Left ventricle myocardium inferior (tissue), 1 donor: ENCODE measurements at regions of chr3 and their contacts with region 1.

Region 1: GRCh38 chr3:88113311-88114162 is 36.2 kb upstream of the C3orf38 start:
- DNase-seq: no peak
- H3K4me3 ChIP-seq: no peak overlapping the region
- H3K27ac ChIP-seq: no peak overlapping the region
- H3K4me1 ChIP-seq: peaks cover 18% of the 10 kb centered on the region
- H3K27me3 ChIP-seq: no peaks in the 10 kb centered on the region
- CTCF ChIP-seq: peak; percentile 84

Region 2: GRCh38 chr3:88059369-88060170 is 54.0 kb before region 1 on chr3:
- intact Hi-C with region 1: loop called (anchors 10 kb)
- DNase-seq: no peak
- H3K4me3 ChIP-seq: peak overlapping the region; percentile 93
- H3K27ac ChIP-seq: peak overlapping the region; percentile 99
- H3K4me1 ChIP-seq: peaks cover 78% of the 10 kb centered on the region
- H3K27me3 ChIP-seq: no peaks in the 10 kb centered on the region
- CTCF ChIP-seq: no peak

Region 3: DNA sequence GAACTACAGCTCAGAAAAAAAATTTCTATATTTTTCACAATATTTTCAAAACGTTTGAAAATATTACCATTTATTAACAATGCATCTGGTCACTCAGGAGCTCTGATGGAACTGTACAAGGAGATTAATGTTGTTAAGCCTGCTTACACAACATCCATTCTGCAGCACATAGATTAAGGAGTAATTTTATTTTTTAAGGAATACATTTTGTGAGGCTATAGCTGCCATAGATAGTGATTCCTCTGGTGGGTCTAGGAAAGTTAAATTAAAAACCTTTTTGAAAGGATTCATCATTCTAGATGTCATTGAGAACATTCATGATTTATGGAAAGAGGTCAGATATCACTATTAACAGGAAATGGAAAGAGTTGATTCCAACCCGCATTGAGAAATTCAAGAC is 233.1 kb after region 1 on chr3:
- intact Hi-C with region 1: no loop called
- DNase-seq: no peak
- H3K4me3 ChIP-seq: no peak overlapping the region
- H3K27ac ChIP-seq: no peak overlapping the region
- H3K4me1 ChIP-seq: no peaks in the 10 kb centered on the region
- H3K27me3 ChIP-seq: no peaks in the 10 kb centered on the region
- CTCF ChIP-seq: no peak